ENCODE measurements at regions of chr12 and their contacts with region 1.

Region 1: DNA sequence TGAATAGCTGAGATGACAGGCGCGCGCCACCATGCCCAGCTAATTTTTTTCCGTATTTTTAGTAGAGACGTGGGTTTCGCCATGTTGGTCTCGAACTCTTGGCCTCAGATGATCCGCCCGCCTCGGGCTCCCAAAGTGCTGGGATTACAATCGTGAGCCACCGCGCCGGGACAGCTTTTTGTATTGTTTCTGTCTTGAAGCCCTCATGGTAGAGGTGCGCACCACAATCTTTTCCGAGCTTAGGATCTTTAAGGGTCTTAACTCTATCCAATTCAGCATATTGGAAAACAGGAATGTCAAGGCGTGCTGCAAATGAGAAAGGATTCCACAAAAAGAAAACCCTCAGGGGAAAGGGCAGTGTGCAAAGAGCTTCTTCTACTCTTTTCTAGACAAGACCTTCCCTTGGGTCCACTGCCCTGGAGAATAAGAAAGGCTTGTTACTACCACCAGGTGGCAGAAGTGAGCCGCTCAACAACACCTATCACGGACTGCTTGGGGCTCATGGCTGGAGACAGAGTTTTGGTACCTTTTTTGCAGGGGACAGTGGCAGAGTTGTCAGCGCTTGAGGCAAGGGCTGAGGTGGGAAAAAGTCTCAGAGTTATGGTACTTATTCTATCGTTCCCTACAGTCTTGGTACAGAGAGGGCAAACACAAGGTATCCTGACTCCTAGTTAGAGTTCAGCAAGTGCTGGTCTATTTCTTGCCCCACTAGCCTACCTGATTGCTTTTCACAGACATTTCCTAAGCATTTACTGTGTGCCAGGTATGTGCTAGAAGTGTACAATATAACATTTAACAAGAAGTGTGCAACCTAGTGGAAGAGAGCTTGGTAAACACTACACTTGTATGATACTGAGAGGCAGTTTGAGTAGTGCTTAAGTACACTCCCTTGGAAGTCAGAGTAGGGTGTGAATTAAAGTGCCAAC is 16.4 kb upstream of the SP7 start:
- DNase-seq: peak; percentile 87
- H3K4me3 Mint-ChIP-seq: no peak overlapping the region
- H3K27ac Mint-ChIP-seq: no peak overlapping the region
- H3K4me1 Mint-ChIP-seq: peaks cover 5% of the 10 kb centered on the region
- H3K27me3 Mint-ChIP-seq: no peaks in the 10 kb centered on the region

Region 2: DNA sequence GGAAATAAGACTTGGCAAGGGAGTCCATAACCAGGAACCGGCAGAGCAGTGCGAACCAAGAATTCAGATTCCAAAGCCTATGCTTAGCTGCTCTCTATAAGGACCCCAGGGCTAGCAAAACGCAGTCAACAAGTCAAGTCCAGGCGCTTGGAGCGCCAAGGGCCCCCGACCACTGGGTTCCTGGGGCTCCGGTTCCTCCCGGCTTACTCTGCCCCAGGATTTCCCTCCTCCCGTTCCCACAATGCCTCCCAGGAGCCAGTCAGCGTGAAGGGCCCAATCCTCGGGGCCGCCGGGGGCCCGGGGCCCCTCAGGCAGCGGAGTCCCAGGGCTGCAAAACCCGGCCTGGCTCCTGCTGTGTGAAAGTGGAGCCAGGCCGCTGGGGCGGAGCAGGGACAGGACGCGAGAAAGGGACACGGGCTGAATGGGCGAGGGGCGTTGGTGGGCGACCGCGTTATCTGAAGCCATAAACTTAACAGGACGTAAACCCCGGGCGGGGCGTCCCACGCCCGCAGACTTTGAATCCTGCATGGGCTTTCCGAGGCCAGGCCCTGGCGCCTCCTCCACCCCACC is 449.2 kb before region 1 on chr12:
- CTCF ChIA-PET with region 1: no interaction called
- POLR2A ChIA-PET with region 1: no interaction called
- DNase-seq: peak; percentile 37
- H3K4me3 Mint-ChIP-seq: no peak overlapping the region
- H3K27ac Mint-ChIP-seq: no peak overlapping the region
- H3K4me1 Mint-ChIP-seq: peaks cover 3% of the 10 kb centered on the region
- H3K27me3 Mint-ChIP-seq: peaks cover 7% of the 10 kb centered on the region

Region 3: GRCh38 chr12:53287741-53288216 is 64.8 kb before region 1 on chr12:
- CTCF ChIA-PET with region 1: no interaction called
- POLR2A ChIA-PET with region 1: no interaction called
- DNase-seq: peak; percentile 76
- H3K4me3 Mint-ChIP-seq: no peak overlapping the region
- H3K27ac Mint-ChIP-seq: peak overlapping the region; percentile 45
- H3K4me1 Mint-ChIP-seq: peaks cover 12% of the 10 kb centered on the region
- H3K27me3 Mint-ChIP-seq: no peaks in the 10 kb centered on the region

Region 4: GRCh38 chr12:53313996-53314395 is 38.6 kb before region 1 on chr12:
- CTCF ChIA-PET with region 1: no interaction called
- POLR2A ChIA-PET with region 1: no interaction called
- DNase-seq: no peak
- H3K4me3 Mint-ChIP-seq: no peak overlapping the region
- H3K27ac Mint-ChIP-seq: no peak overlapping the region
- H3K4me1 Mint-ChIP-seq: peaks cover 4% of the 10 kb centered on the region
- H3K27me3 Mint-ChIP-seq: no peaks in the 10 kb centered on the region

Region 5: DNA sequence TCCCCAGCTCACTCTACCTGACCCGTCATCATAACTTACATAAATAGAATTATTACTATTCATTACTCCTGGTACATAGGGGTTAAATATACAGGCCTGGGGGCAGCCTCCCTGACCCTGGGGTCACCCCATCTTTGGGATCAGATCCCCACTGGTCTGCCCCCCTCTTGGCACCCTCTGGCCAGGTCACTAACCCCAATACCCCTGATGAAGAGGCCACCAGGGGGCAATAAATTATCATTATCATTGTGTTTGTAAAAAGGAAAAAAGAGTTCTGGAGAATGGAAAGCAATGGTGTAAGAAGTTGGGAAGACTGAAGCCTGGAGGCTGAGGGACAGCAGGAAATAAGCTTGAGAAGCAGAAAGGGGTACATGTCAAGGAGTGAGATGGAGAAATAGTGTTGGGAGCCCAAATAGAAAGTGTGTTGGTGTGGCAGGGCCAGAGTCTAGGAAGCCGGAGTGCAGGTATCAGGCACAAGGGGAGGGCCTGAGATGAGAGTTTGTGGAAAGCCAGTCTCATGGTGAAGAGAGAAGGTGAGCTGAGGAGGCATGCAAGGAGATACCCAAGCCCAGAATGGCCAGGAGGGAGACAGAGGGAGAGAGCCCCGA is 25.1 kb before region 1 on chr12:
- CTCF ChIA-PET with region 1: interaction called, 110 read pairs
- POLR2A ChIA-PET with region 1: interaction called, 4 read pairs
- DNase-seq: no peak
- H3K4me3 Mint-ChIP-seq: peak overlapping the region; percentile 4
- H3K27ac Mint-ChIP-seq: no peak overlapping the region
- H3K4me1 Mint-ChIP-seq: peaks cover 21% of the 10 kb centered on the region
- H3K27me3 Mint-ChIP-seq: peaks cover 27% of the 10 kb centered on the region

Region 6: GRCh38 chr12:53379389-53380103 is 27.0 kb after region 1 on chr12:
- CTCF ChIA-PET with region 1: interaction called, 61 read pairs
- POLR2A ChIA-PET with region 1: interaction called, 12 read pairs
- DNase-seq: peak; percentile 99
- H3K4me3 Mint-ChIP-seq: no peak overlapping the region
- H3K27ac Mint-ChIP-seq: no peak overlapping the region
- H3K4me1 Mint-ChIP-seq: peaks cover 40% of the 10 kb centered on the region
- H3K27me3 Mint-ChIP-seq: no peaks in the 10 kb centered on the region

Region 7: DNA sequence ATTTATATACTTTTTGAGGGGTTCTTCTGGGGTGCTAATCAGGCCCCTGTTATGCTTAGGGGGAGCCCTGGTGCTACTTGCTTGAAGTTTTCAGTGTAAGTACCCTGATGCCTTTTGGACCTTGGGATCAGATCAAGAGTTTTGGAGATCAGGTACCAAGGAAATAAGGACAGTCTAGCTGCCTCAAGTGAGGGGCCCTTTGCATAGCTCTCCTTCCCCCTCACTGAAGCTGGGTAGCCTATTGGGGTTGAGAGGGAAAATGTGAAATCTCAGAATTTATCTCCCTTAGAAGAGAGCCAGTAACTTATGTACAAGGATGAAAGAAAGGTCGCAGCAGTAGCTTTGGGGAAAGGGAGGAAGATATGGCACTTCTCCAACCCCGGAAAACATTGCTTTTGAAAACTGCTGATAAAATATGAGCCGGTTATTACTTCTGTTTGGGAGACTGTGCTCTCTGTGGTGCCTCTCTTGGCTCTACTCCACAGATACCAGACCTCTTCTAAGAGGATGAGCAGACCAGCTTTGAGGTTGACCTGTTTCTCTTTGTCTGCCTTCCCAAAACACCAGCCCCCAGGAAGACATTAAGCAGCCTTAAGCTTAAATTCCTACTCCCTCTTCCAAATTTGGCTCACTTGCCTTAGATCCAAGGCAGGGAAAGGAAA is 62.3 kb after region 1 on chr12:
- CTCF ChIA-PET with region 1: interaction called, 138 read pairs
- POLR2A ChIA-PET with region 1: interaction called, 4 read pairs
- DNase-seq: no peak
- H3K4me3 Mint-ChIP-seq: no peak overlapping the region
- H3K27ac Mint-ChIP-seq: no peak overlapping the region
- H3K4me1 Mint-ChIP-seq: peaks cover 30% of the 10 kb centered on the region
- H3K27me3 Mint-ChIP-seq: peaks cover 4% of the 10 kb centered on the region

Region 8: DNA sequence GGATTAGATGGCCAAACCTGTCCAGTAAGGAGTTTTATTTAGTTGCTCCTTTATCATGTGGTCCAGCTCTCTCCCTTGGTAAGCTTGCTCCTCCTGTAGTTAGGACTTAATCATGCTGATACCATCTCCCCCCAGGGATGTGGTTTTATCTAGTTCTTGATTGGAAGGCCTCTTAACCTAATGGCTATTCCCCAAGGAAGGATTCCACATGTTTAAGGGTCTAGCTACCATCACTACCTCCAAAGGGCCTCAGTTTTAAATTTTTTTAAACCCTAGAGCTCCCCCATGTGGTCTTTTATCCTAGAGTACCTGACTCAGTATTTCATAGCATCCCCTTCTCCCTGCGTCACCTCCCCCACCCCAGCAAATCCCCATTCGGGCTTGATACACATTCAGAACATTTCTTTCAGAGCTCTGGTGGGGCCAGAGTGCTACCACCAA is 124.2 kb after region 1 on chr12:
- CTCF ChIA-PET with region 1: interaction called, 11 read pairs
- POLR2A ChIA-PET with region 1: no interaction called
- DNase-seq: no peak
- H3K4me3 Mint-ChIP-seq: no peak overlapping the region
- H3K27ac Mint-ChIP-seq: peak overlapping the region; percentile 6
- H3K4me1 Mint-ChIP-seq: peaks cover 64% of the 10 kb centered on the region
- H3K27me3 Mint-ChIP-seq: no peaks in the 10 kb centered on the region

Region 9: DNA sequence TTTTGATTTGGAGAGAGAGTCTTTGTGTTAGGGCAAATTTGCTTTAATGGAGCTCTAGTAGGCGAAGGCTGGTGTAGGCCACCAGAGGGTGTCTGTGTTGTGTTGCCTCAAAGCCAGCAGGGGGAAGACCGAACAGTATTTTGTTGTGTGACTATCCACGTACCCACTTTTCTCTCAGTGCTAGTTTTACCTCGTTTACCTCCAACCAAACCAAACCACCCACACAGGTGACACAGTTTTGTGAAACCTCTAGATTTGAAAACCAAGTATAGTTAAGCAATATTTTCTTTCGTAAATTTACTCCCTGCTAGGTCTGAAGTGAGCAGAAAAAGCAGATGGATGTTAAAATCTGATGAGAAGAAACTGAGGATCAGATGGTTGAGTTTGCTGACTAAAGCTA is 190.9 kb after region 1 on chr12:
- CTCF ChIA-PET with region 1: no interaction called
- POLR2A ChIA-PET with region 1: no interaction called
- DNase-seq: peak; percentile 51
- H3K4me3 Mint-ChIP-seq: no peak overlapping the region
- H3K27ac Mint-ChIP-seq: no peak overlapping the region
- H3K4me1 Mint-ChIP-seq: peaks cover 9% of the 10 kb centered on the region
- H3K27me3 Mint-ChIP-seq: no peaks in the 10 kb centered on the region

Measured in activated CD4-positive, alpha-beta memory T cell treated with anti-CD3 and anti-CD28 coated beads, Interleukin-2, amount 10 ng/mL, durations not matched to agents 7 days and 5 days (primary cell).